Left cardiac atrium (tissue), 4 donors: ENCODE measurements at regions of chr17 and their contacts with region 1.

Region 1: GRCh38 chr17:67475236-67475937 is 98.3 kb downstream of the PITPNC1 start:
- DNase-seq: peak; percentile 84
- ATAC-seq: peak; percentile 78 to 80

Region 2: DNA sequence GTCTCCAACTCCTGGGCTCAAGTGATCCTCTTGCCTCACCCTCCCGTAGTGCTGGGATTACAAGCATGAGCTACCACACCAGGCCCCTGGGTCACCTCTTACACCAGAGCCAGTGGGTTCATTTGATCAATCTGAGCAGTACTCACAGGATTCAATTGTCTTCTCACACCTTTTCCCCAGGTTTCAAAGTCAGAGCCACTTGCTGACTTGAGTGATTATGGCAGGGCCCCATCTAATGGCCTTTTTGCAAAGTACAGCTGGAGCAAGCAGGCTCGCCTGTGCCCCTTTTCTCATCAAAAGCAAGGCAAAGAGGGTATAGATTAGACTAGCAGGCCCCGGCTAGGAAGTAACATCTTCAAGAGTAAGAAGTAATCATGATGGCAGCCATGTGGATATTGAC is 127.6 kb after region 1 on chr17:
- intact Hi-C with region 1: loop called (anchors 10 kb)
- DNase-seq: no peak
- ATAC-seq: peak; percentile 23 to 24